ENCODE measurements at regions of chr20 and their contacts with region 1.

Region 1: DNA sequence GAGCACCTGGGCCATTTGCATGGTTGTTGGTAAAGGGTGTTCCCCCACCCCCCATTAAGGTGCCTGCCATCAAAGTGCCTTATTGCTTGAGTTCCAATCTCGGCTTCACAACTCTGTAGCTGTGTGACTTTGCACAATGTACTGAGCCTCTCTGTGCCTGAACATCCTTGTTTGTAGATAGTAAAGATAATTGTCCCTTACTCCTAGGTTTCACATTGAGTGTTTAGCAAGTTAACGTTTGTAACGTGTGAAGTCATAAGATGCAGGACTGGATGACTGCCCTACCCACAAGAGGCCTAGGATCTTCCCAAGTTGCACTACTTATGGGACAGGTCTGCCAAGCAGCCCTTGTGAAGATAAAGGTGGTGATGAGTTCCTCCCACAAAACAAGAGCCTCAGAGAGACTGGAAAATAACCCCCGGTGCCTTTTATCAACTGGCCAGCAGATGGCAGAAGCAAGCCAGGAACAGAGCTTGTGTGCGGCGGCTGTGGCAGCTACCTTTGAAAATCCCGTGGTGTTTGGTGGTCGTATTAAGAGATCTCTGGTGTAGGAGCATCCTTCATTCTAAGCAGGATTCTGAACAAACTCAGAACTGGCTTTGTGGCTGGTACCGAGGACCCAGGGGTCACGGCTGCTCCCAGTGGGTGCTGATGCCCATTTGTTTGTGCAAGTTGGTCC is 99.0 kb downstream of the CDH26 start:
- DNase-seq: no peak
- H3K4me3 ChIP-seq: no peak overlapping the region
- H3K27ac ChIP-seq: no peak overlapping the region
- H3K27me3 ChIP-seq: peaks cover 12% of the 10 kb centered on the region
- CTCF ChIP-seq: peak; percentile 94

Region 2: GRCh38 chr20:60046011-60046413 is 11.2 kb before region 1 on chr20:
- CTCF ChIA-PET with region 1: interaction called, 31 read pairs
- POLR2A ChIA-PET with region 1: no interaction called
- DNase-seq: no peak
- H3K4me3 ChIP-seq: no peak overlapping the region
- H3K27ac ChIP-seq: no peak overlapping the region
- H3K27me3 ChIP-seq: no peaks in the 10 kb centered on the region
- CTCF ChIP-seq: no peak

Region 3: DNA sequence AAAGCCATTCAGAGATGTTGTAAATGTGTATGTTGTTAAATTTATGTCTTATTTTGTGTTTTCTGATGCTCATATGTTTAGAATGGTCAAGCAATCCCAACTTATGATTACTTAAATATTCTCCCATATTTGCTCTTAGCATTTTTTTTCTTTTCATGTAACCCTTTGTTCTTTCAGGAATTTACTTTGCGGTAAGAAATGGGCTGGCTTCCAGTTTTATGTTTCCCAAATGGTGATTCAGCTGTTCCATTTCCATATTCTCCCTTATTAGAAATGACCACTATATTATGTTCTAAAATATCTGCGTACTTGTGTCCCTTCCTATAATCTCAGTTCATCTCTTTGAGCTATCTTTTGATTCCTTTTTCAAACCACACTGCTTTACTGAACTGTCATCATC is 14.7 kb after region 1 on chr20:
- CTCF ChIA-PET with region 1: interaction called, 18 read pairs
- POLR2A ChIA-PET with region 1: no interaction called
- DNase-seq: no peak
- H3K4me3 ChIP-seq: no peak overlapping the region
- H3K27ac ChIP-seq: no peak overlapping the region
- H3K27me3 ChIP-seq: peaks cover 26% of the 10 kb centered on the region
- CTCF ChIP-seq: no peak

Region 4: DNA sequence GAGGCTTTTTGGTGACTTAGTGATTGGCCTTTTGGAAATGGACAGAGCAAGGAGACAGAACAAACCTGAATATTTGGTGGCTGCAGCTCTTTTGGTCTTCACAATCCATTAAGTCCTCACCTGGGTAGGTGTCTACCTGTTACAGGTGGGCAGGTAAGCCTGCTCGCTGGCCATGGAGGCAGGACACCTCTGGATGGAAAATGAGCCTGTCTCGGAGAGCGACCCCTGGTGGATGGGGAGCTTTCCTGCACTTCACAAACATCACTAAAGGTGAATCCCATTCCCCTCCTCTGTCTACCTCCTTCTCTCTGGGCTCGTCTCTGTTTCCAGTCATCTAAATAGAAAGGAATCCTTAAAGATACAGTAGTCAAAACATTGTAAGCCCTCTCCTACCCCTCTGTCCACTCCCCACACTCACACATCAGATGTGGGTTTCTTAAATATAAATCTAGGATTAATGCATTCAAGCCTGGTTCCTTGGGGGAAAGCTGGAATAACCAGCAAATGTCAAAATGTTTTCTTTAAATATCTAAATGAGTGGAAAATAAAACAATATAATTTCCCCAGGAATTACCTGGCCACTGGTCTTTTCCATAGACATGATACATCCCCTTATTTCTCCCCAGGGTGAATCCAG is 205.8 kb after region 1 on chr20:
- CTCF ChIA-PET with region 1: interaction called, 12 read pairs
- POLR2A ChIA-PET with region 1: no interaction called
- DNase-seq: no peak
- H3K4me3 ChIP-seq: no peak overlapping the region
- H3K27ac ChIP-seq: no peak overlapping the region
- H3K27me3 ChIP-seq: peaks cover 15% of the 10 kb centered on the region
- CTCF ChIP-seq: peak; percentile 65

Region 5: DNA sequence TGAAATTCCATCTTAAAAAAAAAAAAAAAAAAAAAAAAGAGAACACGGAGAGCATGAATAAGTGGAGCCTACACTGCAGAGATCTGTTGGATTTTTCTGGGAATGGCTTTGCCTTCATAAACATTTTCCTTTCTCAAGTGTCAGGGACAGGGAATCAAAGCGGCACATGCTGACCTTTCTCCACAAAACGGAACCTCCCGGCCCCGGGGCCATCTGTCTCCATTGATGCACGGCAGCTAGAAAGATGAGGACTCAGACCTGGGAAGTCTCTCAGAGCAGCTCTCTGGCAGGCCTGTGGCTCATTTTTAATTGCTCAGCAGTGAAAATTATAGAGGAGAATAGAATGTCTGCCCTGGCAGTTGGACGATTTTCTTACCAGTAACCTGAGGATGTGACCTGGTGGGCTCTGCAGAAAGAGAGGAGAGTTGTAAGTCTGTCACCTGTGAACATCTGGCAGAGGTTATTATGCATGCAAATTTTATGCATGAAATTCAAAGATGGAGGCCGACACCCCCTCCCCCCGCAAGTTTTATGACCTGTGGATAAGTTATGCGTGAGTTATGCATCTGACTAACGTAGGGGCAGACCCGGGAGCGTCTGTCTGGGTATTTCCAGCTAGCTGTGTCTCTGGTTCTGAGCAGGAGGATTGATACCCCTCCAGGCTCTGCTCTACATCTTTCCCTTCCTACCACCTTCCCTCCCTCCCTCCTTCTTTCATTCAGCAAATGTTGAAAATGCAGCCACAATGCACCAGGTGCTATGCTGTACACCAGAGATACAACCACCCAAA is 253.5 kb after region 1 on chr20:
- CTCF ChIA-PET with region 1: no interaction called
- POLR2A ChIA-PET with region 1: no interaction called
- DNase-seq: no peak
- H3K4me3 ChIP-seq: no peak overlapping the region
- H3K27ac ChIP-seq: no peak overlapping the region
- H3K27me3 ChIP-seq: no peaks in the 10 kb centered on the region
- CTCF ChIP-seq: no peak

Measured in AG04450 (cell line).